Sigmoid colon (tissue), 7 donors: ENCODE measurements at regions of chr5 and their contacts with region 1.

Region 1: DNA sequence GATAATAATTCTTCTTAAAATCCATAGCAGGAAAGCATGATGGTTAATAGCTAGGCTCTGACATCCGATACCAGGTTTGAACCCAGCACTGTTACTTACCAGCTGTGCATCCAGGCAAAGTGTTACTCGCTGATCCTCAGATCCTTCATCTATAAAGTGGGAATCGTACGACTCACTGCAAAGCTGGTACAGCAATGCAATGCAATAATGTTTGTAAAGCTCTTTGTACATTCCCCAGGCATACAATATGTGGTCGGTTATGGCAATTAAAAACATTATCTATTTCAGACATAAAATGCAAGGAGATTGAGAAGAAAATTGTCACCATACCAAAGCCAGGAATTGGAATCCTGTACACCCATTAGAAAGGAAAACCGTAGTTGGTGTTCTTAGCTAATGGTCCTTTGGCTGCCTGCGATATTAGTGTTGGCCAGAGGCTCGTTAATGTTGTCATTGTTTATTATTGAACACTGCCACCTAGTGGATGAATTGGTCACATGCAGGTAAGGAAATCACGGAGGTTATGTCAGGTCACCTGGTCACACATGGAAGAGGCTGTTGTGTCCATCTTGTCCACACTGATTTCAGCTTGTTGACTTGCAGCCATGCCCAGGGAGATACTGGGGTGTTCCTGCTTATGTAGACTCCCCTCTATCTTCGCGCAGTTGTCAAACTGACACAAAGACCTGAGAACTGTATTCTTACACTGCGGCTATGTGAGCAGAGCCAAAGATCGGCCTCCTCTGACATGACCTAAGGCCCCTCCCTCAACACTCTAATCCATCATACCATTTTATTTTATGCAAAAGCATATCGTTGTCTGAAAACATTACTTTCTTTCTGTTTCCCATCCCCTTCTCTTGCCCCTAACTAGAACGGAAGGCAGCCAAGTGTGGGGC is 87.5 kb upstream of the PPP2R2B start:
- DNase-seq: peak; percentile 69
- H3K4me3 ChIP-seq: no peak overlapping the region
- H3K27ac ChIP-seq: no peak overlapping the region
- H3K4me1 ChIP-seq: peaks cover 0 to 11% (median 0%) of the 10 kb centered on the region in 4 donors
- H3K27me3 ChIP-seq: no peaks in the 10 kb centered on the region
- CTCF ChIP-seq: peak; percentile 81 to 93 (median 88)
- EP300 ChIP-seq: no peak
- POLR2A ChIP-seq: no peak

Region 2: DNA sequence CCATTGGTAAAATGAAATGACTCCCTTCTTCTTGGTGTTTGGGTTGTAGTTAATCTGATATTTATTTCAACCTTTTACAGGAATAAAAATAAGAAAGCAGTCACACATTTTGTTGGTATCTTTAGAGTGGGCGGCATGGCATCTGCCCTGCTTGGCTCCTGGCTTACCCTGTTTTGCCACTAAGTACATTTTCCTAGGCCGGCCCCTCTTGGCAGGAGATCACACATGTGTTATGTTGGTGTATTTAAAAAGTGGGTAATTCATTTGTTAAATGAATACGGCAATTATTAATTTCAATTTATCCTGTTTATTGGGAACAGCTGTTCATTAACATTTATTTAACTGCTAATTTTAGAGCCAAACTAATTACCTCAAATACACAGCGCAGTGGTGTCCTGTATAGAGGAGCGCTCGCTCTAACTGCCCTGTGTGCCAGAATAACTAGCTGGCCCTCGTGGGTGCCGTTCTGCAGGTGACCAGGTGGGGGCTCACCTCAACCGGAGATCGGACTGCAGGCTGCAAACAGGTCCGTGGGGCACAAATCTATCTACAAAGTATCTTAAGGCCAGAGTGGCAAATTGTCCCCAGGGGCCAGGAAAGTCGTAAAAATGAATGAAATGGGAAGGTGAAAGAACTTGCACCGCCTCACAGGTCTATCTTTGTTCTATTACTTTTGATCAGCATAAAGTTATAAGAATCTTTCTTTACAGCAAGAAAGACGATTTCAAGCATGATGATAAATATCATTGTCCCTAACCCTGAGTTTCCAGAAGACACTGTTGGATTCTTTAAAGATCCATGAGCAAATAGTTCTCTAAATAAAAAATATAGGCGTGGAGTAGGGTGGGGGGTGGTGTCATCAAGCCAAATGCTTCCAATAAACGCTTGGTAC is 423.8 kb before region 1 on chr5:
- intact Hi-C with region 1: loop called (anchors 2 kb)
- DNase-seq: peak; percentile 77
- H3K4me3 ChIP-seq: no peak overlapping the region
- H3K27ac ChIP-seq: no peak overlapping the region
- H3K4me1 ChIP-seq: no peaks in the 10 kb centered on the region
- H3K27me3 ChIP-seq: no peaks in the 10 kb centered on the region
- CTCF ChIP-seq: peak; percentile 40 to 87 (median 72)
- EP300 ChIP-seq: no peak
- POLR2A ChIP-seq: no peak

Region 3: GRCh38 chr5:146662229-146662628 is 303.8 kb before region 1 on chr5:
- intact Hi-C with region 1: loop called (anchors 10 kb)
- DNase-seq: no peak
- H3K4me3 ChIP-seq: no peak overlapping the region
- H3K27ac ChIP-seq: no peak overlapping the region
- H3K4me1 ChIP-seq: peaks cover 0 to 11% (median 2%) of the 10 kb centered on the region in 4 donors
- H3K27me3 ChIP-seq: no peaks in the 10 kb centered on the region
- CTCF ChIP-seq: peak in 3 of 4 experiments; percentile 15 to 68 (median 28)
- EP300 ChIP-seq: no peak
- POLR2A ChIP-seq: no peak

Region 4: GRCh38 chr5:147188200-147189108 is 222.4 kb after region 1 on chr5:
- intact Hi-C with region 1: loop called (anchors 5 kb)
- DNase-seq: no peak
- H3K4me3 ChIP-seq: peak overlapping the region in 2 of 4 donors; percentile 11 to 15
- H3K27ac ChIP-seq: no peak overlapping the region
- H3K4me1 ChIP-seq: peaks cover 0 to 4% (median 1%) of the 10 kb centered on the region in 4 donors
- H3K27me3 ChIP-seq: no peaks in the 10 kb centered on the region
- CTCF ChIP-seq: peak; percentile 61 to 86 (median 74)
- EP300 ChIP-seq: no peak
- POLR2A ChIP-seq: no peak

Region 5: GRCh38 chr5:147276497-147276896 is 310.5 kb after region 1 on chr5:
- intact Hi-C with region 1: no loop called
- DNase-seq: no peak
- H3K4me3 ChIP-seq: no peak overlapping the region
- H3K27ac ChIP-seq: no peak overlapping the region
- H3K4me1 ChIP-seq: no peaks in the 10 kb centered on the region
- H3K27me3 ChIP-seq: no peaks in the 10 kb centered on the region
- CTCF ChIP-seq: no peak
- EP300 ChIP-seq: no peak
- POLR2A ChIP-seq: no peak